ENCODE measurements at regions of chr4 and their contacts with region 1.

Region 1: GRCh38 chr4:53804719-53805118 is 213.4 kb upstream of the LNX1 start:
- DNase-seq: peak; percentile 47 to 52
- H3K4me3 ChIP-seq: no peak overlapping the region
- H3K4me3 Mint-ChIP-seq: no peak overlapping the region
- H3K27ac Mint-ChIP-seq: no peak overlapping the region
- H3K4me1 ChIP-seq: peaks cover 7% of the 10 kb centered on the region; the same call in 1 of the 2 replicates
- H3K4me1 Mint-ChIP-seq: peaks cover 17% of the 10 kb centered on the region
- H3K27me3 ChIP-seq: no peaks in the 10 kb centered on the region
- H3K27me3 Mint-ChIP-seq: no peaks in the 10 kb centered on the region
- CTCF ChIP-seq: peak; percentile 45 to 62

Region 2: GRCh38 chr4:53702334-53703266 is 102.1 kb before region 1 on chr4:
- CTCF ChIA-PET with region 1: interaction called, 14 read pairs
- POLR2A ChIA-PET with region 1: no interaction called
- intact Hi-C with region 1: loop called (anchors 1 kb)
- DNase-seq: no peak
- H3K4me3 ChIP-seq: no peak overlapping the region
- H3K4me3 Mint-ChIP-seq: no peak overlapping the region
- H3K27ac Mint-ChIP-seq: no peak overlapping the region
- H3K4me1 ChIP-seq: no peaks in the 10 kb centered on the region
- H3K4me1 Mint-ChIP-seq: peaks cover 9% of the 10 kb centered on the region
- H3K27me3 ChIP-seq: no peaks in the 10 kb centered on the region
- H3K27me3 Mint-ChIP-seq: no peaks in the 10 kb centered on the region
- CTCF ChIP-seq: no peak

Region 3: GRCh38 chr4:53840643-53841042 is 35.9 kb after region 1 on chr4:
- CTCF ChIA-PET with region 1: no interaction called
- POLR2A ChIA-PET with region 1: no interaction called
- intact Hi-C with region 1: no loop called
- DNase-seq: peak in 1 of 2 experiments; percentile 9
- H3K4me3 ChIP-seq: no peak overlapping the region
- H3K4me3 Mint-ChIP-seq: no peak overlapping the region
- H3K27ac Mint-ChIP-seq: no peak overlapping the region
- H3K4me1 ChIP-seq: peaks cover 9% of the 10 kb centered on the region; the same call in 1 of the 2 replicates
- H3K4me1 Mint-ChIP-seq: peaks cover 20% of the 10 kb centered on the region
- H3K27me3 ChIP-seq: no peaks in the 10 kb centered on the region
- H3K27me3 Mint-ChIP-seq: no peaks in the 10 kb centered on the region
- CTCF ChIP-seq: no peak

Measured in Caco-2 (cell line).